Caco-2 (cell line): ENCODE measurements at regions of chr4 and their contacts with region 1.

Region 1: DNA sequence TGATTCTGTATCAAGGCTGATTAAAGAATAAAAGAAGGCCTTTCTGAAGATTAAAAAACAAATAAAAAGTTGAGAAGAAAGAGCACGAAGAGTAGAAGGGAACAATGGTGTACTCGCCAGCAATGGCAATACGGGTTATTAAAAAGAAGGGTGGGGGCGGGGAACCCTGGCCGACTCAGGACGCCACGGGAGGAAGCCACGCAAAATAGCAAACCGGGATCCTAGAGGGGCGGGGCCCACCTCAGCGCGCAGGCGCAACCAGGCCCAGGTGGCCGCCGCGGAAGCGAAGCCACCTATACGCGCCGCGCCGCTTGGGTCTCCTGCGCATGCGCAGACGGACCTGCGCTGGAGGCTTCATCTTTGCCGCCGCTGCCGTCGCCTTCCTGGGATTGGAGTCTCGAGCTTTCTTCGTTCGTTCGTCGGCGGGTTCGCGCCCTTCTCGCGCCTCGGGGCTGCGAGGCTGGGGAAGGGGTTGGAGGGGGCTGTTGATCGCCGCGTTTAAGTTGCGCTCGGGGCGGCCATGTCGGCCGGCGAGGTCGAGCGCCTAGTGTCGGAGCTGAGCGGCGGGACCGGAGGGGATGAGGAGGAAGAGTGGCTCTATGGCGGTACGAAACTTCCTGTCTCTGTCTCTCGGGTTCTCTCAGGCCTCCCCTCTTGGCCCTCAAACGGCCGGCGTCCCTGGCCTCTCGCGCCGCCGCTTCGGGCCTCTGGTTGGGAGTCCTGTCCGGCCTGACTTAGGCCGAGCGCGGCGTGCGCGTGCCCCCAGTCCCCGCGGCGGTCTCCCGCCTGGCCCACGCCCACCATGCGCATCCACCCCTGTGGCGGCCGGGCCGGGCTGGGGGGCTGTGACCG is at the start of gene FIP1L1:
- DNase-seq: peak; percentile 93 to 96
- H3K4me3 ChIP-seq: peak within 1 kb of the TSS; percentile 78
- H3K4me3 Mint-ChIP-seq: peak within 1 kb of the TSS; percentile 98
- H3K27ac Mint-ChIP-seq: peak within 1 kb of the TSS; percentile 98
- H3K4me1 ChIP-seq: peaks cover 14% of the 10 kb centered on the region; the same call in 1 of the 2 replicates
- H3K4me1 Mint-ChIP-seq: peaks cover 16% of the 10 kb centered on the region
- H3K27me3 ChIP-seq: no peaks in the 10 kb centered on the region
- H3K27me3 Mint-ChIP-seq: no peaks in the 10 kb centered on the region
- CTCF ChIP-seq: no peak
- total RNA-seq, gene FIP1L1: 62.5 and 69.4 TPM in 2 replicates

Region 2: DNA sequence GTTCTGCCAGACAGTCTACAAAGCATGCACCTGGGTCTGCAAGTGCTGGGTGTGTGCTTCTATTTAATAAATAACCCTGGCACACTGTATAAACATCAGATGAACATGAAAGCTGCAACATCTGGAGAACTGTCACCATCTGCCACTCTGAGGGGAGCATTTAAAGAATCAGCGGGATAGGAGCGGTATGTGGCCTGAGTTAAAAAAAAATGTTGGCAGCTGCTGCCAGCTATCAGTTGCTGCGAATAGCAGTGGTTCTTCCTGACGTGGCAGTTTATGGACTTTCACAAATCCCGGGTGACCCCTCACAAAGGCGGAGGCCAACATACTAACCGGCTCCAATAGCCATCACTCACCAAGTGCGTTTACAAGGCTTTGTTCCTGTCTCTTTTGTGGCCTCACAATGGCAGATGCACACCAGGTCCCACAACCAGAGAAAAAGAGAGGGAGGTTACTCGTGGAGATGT is 420.3 kb before region 1 on chr4:
- CTCF ChIA-PET with region 1: no interaction called
- POLR2A ChIA-PET with region 1: no interaction called
- intact Hi-C with region 1: no loop called
- DNase-seq: no peak
- H3K4me3 ChIP-seq: no peak overlapping the region
- H3K4me3 Mint-ChIP-seq: no peak overlapping the region
- H3K27ac Mint-ChIP-seq: no peak overlapping the region
- H3K4me1 ChIP-seq: peaks cover 13% of the 10 kb centered on the region; the same call in 1 of the 2 replicates
- H3K4me1 Mint-ChIP-seq: peaks cover 20% of the 10 kb centered on the region
- H3K27me3 ChIP-seq: no peaks in the 10 kb centered on the region
- H3K27me3 Mint-ChIP-seq: no peaks in the 10 kb centered on the region
- CTCF ChIP-seq: no peak

Region 3: DNA sequence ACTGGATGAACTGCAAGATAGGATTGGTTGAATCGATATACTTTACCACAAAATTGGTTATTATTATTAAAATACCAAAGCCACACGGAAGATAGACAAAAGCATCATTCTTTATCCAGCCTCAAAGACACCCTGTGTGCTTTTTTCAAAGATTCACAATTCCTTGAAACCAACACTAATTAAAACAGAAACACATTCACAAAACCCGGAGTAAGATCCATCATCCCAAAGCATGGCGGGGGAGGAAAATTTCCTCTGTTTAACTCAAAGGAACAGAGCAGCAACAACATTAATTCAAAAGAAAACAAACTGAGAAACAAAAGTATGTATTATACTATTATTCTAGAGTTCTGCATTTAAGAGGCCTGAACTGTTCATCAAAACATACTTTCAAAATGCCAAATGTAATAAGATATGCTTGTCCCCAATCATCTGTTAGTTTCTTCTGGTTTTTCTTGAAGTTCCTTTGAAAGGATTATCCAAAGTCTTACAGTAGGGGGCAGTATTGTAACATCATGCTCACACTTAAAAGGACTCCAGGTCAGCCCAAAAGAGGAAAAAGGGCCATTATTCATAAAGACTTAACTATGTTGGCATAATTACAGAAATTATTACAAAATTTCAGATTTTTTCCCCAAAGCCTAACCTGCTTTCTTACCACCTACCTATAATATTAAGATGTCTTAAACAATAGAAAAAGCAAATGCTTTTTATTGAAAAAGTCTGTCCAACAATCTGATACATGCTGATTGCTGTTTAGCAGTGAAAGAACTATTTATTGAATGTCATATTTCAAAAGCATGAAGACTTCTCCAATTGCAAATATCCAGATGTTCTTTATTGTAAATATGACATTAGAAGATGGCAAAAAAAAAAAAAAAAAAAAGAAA is 180.4 kb before region 1 on chr4:
- CTCF ChIA-PET with region 1: no interaction called
- POLR2A ChIA-PET with region 1: no interaction called
- intact Hi-C with region 1: loop called (anchors 5 kb)
- DNase-seq: peak in 1 of 2 experiments; percentile 59
- H3K4me3 ChIP-seq: no peak overlapping the region
- H3K4me3 Mint-ChIP-seq: no peak overlapping the region
- H3K27ac Mint-ChIP-seq: no peak overlapping the region
- H3K4me1 ChIP-seq: no peaks in the 10 kb centered on the region
- H3K4me1 Mint-ChIP-seq: peaks cover 3% of the 10 kb centered on the region
- H3K27me3 ChIP-seq: no peaks in the 10 kb centered on the region
- H3K27me3 Mint-ChIP-seq: no peaks in the 10 kb centered on the region
- CTCF ChIP-seq: peak; percentile 61 to 66

Region 4: GRCh38 chr4:53365486-53366300 is 11.9 kb before region 1 on chr4 and contains the start of gene SCFD2:
- CTCF ChIA-PET with region 1: no interaction called
- POLR2A ChIA-PET with region 1: interaction called, 6 read pairs
- intact Hi-C with region 1: loop called (anchors 1 kb)
- DNase-seq: peak; percentile 96 to 98
- H3K4me3 ChIP-seq: peak within 1 kb of the TSS; percentile 88
- H3K4me3 Mint-ChIP-seq: peak within 1 kb of the TSS; percentile 97
- H3K27ac Mint-ChIP-seq: peak within 1 kb of the TSS; percentile 85
- H3K4me1 ChIP-seq: peaks cover 9% of the 10 kb centered on the region
- H3K4me1 Mint-ChIP-seq: peaks cover 21% of the 10 kb centered on the region
- H3K27me3 ChIP-seq: no peaks in the 10 kb centered on the region
- H3K27me3 Mint-ChIP-seq: peaks cover 3% of the 10 kb centered on the region
- CTCF ChIP-seq: no peak
- total RNA-seq, gene SCFD2: 12.2 and 14.4 TPM in 2 replicates

Region 5: DNA sequence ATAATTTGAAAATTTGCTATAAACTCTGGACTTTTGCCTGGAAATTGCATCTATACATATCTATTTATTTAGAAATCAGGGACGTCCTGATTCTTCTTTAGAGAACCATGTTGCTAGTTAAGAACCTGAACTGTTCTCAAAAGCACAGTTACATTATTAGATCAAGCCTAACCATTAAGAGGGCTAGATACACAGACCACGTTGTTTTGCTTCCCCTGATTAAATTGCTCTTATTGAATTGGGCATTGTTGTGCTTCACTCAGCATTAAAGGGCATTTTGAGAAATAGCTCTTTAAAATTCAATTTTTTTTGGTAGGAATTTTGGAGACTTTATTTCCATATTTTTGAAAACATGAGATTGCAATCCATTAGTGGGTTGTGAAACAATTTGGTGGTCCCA is 44.2 kb after region 1 on chr4:
- CTCF ChIA-PET with region 1: no interaction called
- POLR2A ChIA-PET with region 1: no interaction called
- intact Hi-C with region 1: no loop called
- DNase-seq: no peak
- H3K4me3 ChIP-seq: no peak overlapping the region
- H3K4me3 Mint-ChIP-seq: no peak overlapping the region
- H3K27ac Mint-ChIP-seq: no peak overlapping the region
- H3K4me1 ChIP-seq: no peaks in the 10 kb centered on the region
- H3K4me1 Mint-ChIP-seq: no peaks in the 10 kb centered on the region
- H3K27me3 ChIP-seq: no peaks in the 10 kb centered on the region
- H3K27me3 Mint-ChIP-seq: no peaks in the 10 kb centered on the region
- CTCF ChIP-seq: no peak